Activated CD8-positive, alpha-beta T cell treated with anti-CD3 and anti-CD28 coated beads for 36 hours (primary cell): ENCODE measurements at regions of chr14 and their contacts with region 1.

Region 1: DNA sequence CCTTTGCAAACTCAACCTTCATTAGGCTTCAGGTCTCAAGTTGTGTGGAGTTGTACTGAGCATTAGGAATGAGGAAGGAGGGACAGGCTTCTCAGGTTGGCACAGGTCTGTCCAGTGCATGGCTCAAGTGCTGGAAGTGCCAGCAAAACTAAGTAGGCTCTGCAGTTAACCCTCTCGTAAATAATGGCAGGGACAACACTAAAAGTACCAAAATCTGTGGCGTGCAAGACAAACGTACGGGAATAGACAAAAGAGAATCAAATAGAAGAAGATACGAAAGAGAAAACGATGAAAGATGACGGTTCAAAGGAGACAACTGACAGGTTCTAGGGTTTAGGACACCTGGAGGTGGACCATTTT is 612 bp downstream of the TRAPPC6B start:
- DNase-seq: no peak
- ATAC-seq: no peak
- H3K4me3 Mint-ChIP-seq: peak overlapping the region; percentile 80
- H3K27ac Mint-ChIP-seq: peak overlapping the region; percentile 98
- H3K4me1 Mint-ChIP-seq: peaks cover 38% of the 10 kb centered on the region
- H3K27me3 Mint-ChIP-seq: no peaks in the 10 kb centered on the region
- CTCF ChIP-seq: no peak

Region 2: DNA sequence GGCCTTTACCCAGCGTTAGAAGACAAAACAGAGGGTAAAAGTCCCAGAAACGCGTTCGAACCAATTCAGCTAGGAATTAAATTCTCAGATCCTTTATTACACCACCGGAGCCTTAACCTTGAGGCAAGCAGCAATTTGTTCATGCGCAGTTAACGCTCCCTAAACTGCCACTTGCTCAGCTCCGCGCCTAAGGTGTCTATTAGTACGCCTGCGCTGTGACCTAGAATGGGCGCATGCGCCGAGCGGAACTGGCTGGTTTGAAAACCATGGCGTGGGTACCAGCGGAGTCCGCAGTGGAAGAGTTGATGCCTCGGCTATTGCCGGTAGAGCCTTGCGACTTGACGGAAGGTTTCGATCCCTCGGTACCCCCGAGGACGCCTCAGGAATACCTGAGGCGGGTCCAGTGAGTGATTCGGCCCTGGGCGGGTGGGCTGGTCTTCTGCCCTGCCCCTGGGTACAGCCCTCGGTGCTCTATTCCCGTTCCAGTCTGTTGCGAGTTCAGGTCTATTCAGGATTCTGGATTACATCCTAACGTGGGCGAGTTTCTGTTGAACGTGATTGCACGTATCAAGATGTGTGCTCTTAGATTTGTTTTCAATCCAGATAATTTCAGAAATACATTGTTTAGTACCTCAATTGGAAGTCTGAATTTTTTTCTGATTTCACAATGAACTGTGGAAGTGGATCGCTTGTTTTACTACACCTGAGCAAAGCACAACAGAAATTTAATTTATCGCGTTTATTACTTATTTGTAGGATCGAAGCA is 55.3 kb before region 1 on chr14 and contains the start of gene GEMIN2:
- CTCF ChIA-PET with region 1: interaction called, 5 read pairs
- POLR2A ChIA-PET with region 1: interaction called, 10 read pairs
- intact Hi-C with region 1: loop called (anchors 5 kb)
- DNase-seq: peak; percentile 97
- ATAC-seq: peak; percentile 99
- H3K4me3 Mint-ChIP-seq: peak within 1 kb of the TSS; percentile 96
- H3K27ac Mint-ChIP-seq: peak within 1 kb of the TSS; percentile 95
- H3K4me1 Mint-ChIP-seq: peaks cover 21% of the 10 kb centered on the region
- H3K27me3 Mint-ChIP-seq: no peaks in the 10 kb centered on the region
- CTCF ChIP-seq: no peak
- total RNA-seq, gene GEMIN2: 21.6 to 25.3 TPM

Region 3: DNA sequence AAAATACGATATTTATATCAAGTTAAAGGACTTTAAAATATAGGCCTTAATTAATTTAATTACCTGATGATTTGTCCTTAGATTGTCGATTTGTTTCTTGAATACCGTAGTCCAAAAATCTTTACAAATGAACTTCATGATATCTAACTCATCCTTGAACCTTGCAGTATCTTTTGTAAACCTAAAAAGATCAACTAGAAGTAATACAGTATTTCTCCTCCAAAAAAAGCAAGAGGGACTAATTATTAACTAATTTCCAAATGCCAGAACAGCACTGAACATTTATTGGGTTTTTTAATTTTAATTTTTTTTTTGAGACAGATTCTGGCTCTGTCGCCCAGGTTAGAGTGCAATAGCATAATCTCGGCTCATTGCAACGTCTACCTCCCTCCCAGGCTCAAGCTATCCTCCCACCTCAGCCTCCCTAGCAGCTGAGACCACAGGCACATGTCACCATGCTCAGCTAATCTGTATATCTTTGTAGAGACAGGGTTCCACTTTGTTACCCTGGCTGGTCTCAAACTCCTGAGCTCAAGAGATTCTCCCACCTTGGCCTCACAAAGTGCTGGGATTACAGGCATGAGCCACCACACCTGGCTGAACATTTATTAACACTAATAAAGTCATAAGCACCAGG is 11.2 kb before region 1 on chr14:
- CTCF ChIA-PET with region 1: interaction called, 4 read pairs
- POLR2A ChIA-PET with region 1: interaction called, 25 read pairs
- intact Hi-C with region 1: no loop called
- DNase-seq: no peak
- ATAC-seq: no peak
- H3K4me3 Mint-ChIP-seq: no peak overlapping the region
- H3K27ac Mint-ChIP-seq: no peak overlapping the region
- H3K4me1 Mint-ChIP-seq: peaks cover 14% of the 10 kb centered on the region
- H3K27me3 Mint-ChIP-seq: no peaks in the 10 kb centered on the region
- CTCF ChIP-seq: no peak

Region 4: GRCh38 chr14:39181026-39181692 is 11.6 kb after region 1 on chr14:
- CTCF ChIA-PET with region 1: no interaction called
- POLR2A ChIA-PET with region 1: interaction called, 17 read pairs
- intact Hi-C with region 1: no loop called
- DNase-seq: no peak
- ATAC-seq: no peak
- H3K4me3 Mint-ChIP-seq: no peak overlapping the region
- H3K27ac Mint-ChIP-seq: no peak overlapping the region
- H3K4me1 Mint-ChIP-seq: peaks cover 27% of the 10 kb centered on the region
- H3K27me3 Mint-ChIP-seq: no peaks in the 10 kb centered on the region
- CTCF ChIP-seq: no peak